Activated CD4-positive, alpha-beta T cell treated with anti-CD3 and anti-CD28 coated beads, Interleukin-2, amount 10 ng/mL, durations not matched to agents 24 days and 14 days (primary cell): ENCODE measurements at regions of chr11 and their contacts with region 1.

Region 1: GRCh38 chr11:86291466-86292262 is 10.4 kb upstream of the HIKESHI start:
- DNase-seq: peak; percentile 86
- H3K4me3 Mint-ChIP-seq: peak overlapping the region; percentile 21
- H3K27ac Mint-ChIP-seq: peak overlapping the region; percentile 70
- H3K4me1 Mint-ChIP-seq: peaks cover 48% of the 10 kb centered on the region
- H3K27me3 Mint-ChIP-seq: peaks cover 1% of the 10 kb centered on the region

Region 2: DNA sequence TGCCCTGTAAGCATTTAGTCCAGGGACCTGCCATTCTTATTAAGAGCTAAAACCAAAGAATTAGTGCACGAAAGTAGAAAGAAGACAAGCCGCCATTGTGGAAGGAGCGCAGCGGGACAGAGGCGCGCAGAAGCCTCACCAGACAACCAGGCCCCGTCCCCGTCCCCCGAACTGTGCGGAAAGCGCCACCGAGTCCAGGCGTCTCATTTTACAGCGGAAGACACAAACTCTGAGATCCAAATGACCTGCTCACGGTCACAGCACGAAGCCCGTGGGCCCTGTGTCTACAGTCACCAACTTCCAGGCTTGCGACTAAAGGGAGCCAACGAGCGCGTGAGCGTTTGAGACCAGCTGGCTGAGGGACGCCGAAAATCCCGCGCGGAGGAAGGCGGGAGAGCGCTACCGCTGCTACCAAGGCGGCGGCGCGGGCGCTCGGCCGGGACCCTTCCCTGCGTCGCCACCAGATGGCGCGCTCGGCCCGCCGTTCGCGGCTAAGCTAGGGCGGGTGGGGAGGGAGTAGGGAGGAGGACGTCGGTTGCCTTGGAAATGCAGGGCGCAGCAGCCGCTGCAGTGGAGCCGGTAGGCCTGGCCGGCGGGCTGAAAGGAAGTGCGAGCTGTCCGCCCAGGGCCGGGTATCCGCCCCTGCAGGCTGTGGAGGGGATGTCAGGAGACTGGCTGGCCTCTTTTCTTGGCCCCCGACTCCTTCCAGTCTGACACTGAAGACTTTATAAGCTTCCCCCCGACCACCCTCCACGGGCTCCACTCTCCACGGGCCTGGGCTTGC is 436.9 kb before region 1 on chr11:
- intact Hi-C with region 1: loop called (anchors 1 kb)
- DNase-seq: peak; percentile 98
- H3K4me3 Mint-ChIP-seq: peak overlapping the region; percentile 94
- H3K27ac Mint-ChIP-seq: peak overlapping the region; percentile 96
- H3K4me1 Mint-ChIP-seq: peaks cover 11% of the 10 kb centered on the region
- H3K27me3 Mint-ChIP-seq: no peaks in the 10 kb centered on the region

Region 3: DNA sequence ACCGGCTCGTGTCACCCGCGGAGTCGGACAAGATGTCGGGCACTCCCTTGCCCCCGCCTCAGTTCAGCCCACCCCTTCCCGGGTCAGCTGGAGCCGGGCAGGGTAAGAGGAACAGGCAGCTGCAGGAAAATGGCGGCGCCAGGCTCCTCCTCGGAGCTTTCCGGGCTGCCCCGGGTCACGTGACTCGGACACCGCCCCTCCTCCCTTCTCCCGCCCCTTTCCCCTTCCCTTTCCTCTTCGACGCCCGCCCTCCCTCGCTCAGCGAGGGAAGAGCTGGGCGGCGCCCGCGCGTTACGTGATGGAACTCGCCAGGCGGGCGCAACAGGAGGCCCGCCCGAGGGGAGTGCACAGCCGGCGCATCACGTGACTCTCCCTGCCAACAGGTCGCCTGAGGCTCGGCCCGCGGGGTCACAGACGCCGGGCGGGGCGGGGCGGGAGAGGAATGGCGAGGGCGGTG is 222.7 kb before region 1 on chr11 and contains the start of gene PICALM:
- intact Hi-C with region 1: loop called (anchors 2 kb)
- DNase-seq: peak; percentile 99
- H3K4me3 Mint-ChIP-seq: peak within 1 kb of the TSS; percentile 100
- H3K27ac Mint-ChIP-seq: peak within 1 kb of the TSS; percentile 97
- H3K4me1 Mint-ChIP-seq: peaks cover 33% of the 10 kb centered on the region
- H3K27me3 Mint-ChIP-seq: no peaks in the 10 kb centered on the region
- total RNA-seq, gene PICALM: 141 and 156 TPM in 2 replicates

Region 4: GRCh38 chr11:86193297-86194095 is 98.2 kb before region 1 on chr11:
- intact Hi-C with region 1: no loop called
- DNase-seq: peak; percentile 89
- H3K4me3 Mint-ChIP-seq: peak overlapping the region; percentile 70
- H3K27ac Mint-ChIP-seq: peak overlapping the region; percentile 73
- H3K4me1 Mint-ChIP-seq: peaks cover 30% of the 10 kb centered on the region
- H3K27me3 Mint-ChIP-seq: no peaks in the 10 kb centered on the region

Region 5: GRCh38 chr11:86218125-86219084 is 73.3 kb before region 1 on chr11:
- intact Hi-C with region 1: loop called (anchors 1 kb)
- DNase-seq: peak; percentile 89
- H3K4me3 Mint-ChIP-seq: peak overlapping the region; percentile 70
- H3K27ac Mint-ChIP-seq: peak overlapping the region; percentile 84
- H3K4me1 Mint-ChIP-seq: peaks cover 59% of the 10 kb centered on the region
- H3K27me3 Mint-ChIP-seq: no peaks in the 10 kb centered on the region

Region 6: GRCh38 chr11:86418917-86419316 is 127.3 kb after region 1 on chr11:
- intact Hi-C with region 1: loop called (anchors 2 kb)
- DNase-seq: no peak
- H3K4me3 Mint-ChIP-seq: no peak overlapping the region
- H3K27ac Mint-ChIP-seq: no peak overlapping the region
- H3K4me1 Mint-ChIP-seq: peaks cover 9% of the 10 kb centered on the region
- H3K27me3 Mint-ChIP-seq: no peaks in the 10 kb centered on the region

Region 7: DNA sequence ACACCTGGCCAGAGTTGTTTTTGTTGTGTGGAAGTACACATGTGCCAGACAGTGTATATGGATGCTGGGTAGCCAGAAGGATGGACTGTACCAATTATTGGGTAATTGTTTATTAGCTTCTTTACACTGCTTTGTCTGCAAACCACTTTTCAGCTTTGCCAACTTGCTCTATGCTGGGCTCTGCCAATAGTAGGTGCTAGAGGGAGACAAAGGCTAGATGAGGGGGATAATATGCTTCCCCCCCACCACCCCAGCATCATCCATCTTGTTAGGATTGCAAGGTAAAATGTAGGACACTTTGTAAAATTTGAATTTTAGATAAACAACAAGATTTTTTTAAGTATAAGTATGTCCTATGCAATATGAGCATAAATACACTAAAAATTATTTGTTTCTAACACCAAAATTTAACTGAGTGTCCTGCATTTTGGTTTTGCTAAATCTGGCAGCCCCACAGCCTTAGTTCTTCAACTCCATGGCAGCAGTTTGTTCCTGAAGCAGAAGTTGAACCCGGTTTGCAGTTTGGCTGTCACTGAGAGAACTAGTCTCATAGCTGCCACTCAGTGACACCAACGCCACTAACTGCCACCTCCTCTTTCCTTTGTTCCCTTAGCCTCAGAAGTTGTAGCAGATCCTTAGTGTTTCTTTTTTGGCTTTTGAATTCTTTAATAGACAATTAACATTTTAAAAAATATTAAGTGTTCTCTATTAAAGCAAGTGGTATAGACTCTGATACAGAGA is 161.8 kb after region 1 on chr11:
- intact Hi-C with region 1: no loop called
- DNase-seq: no peak
- H3K4me3 Mint-ChIP-seq: no peak overlapping the region
- H3K27ac Mint-ChIP-seq: no peak overlapping the region
- H3K4me1 Mint-ChIP-seq: peaks cover 29% of the 10 kb centered on the region
- H3K27me3 Mint-ChIP-seq: no peaks in the 10 kb centered on the region

Region 8: GRCh38 chr11:86802601-86803051 is 511.0 kb after region 1 on chr11:
- intact Hi-C with region 1: loop called (anchors 2 kb)
- DNase-seq: peak; percentile 74
- H3K4me3 Mint-ChIP-seq: peak overlapping the region; percentile 87
- H3K27ac Mint-ChIP-seq: peak overlapping the region; percentile 65
- H3K4me1 Mint-ChIP-seq: peaks cover 50% of the 10 kb centered on the region
- H3K27me3 Mint-ChIP-seq: peaks cover 27% of the 10 kb centered on the region